ENCODE measurements at regions of chr21 and their contacts with region 1.

Region 1: DNA sequence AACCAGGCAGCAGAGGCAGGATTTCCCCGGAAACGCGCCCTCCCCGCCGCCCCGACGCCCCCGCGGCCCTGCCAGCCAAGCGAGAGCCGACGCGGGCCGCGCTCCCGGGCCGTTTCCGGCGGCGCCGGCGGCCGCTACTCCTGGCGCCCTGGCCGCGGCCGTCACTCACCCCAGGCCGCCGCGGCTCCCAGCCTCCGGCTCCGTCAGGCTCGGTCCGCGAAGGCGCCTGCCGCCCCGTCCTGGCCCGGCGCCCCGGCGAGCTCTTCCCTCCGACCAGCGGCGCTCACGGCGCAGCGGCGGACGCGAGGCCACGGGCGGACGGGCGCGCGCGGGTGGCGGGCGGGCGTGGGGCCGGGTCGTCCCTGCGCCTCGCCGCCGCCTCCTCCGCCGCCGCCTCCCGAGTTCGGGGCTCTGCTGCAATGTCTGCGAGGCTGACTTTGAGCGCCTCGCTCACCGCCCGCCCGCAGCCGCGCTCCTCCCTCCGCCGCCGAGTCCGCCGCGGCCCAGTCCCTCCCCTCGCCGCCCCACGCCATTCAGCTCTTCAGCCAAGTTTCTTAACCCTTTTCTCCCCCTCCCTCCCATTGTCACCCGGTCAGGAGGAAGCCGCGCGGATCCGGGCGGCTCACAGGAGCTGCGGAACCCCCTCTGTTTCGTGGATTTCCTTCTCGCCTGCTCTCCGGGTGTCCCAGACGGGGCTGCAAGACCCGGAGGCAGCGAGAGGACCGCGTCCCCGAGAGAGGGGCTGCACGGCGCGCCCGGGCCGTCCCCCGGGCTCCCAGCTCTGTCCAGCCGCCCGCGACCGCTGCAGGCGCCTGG is at the start of gene NRIP1:
- DNase-seq: peak; percentile 81
- H3K4me3 Mint-ChIP-seq: peak within 1 kb of the TSS; percentile 84
- H3K27ac Mint-ChIP-seq: peak within 1 kb of the TSS; percentile 86
- H3K4me1 Mint-ChIP-seq: peaks cover 45% of the 10 kb centered on the region
- H3K27me3 Mint-ChIP-seq: peaks cover 16% of the 10 kb centered on the region
- total RNA-seq, gene NRIP1: 4.4 to 5.4 TPM

Region 2: DNA sequence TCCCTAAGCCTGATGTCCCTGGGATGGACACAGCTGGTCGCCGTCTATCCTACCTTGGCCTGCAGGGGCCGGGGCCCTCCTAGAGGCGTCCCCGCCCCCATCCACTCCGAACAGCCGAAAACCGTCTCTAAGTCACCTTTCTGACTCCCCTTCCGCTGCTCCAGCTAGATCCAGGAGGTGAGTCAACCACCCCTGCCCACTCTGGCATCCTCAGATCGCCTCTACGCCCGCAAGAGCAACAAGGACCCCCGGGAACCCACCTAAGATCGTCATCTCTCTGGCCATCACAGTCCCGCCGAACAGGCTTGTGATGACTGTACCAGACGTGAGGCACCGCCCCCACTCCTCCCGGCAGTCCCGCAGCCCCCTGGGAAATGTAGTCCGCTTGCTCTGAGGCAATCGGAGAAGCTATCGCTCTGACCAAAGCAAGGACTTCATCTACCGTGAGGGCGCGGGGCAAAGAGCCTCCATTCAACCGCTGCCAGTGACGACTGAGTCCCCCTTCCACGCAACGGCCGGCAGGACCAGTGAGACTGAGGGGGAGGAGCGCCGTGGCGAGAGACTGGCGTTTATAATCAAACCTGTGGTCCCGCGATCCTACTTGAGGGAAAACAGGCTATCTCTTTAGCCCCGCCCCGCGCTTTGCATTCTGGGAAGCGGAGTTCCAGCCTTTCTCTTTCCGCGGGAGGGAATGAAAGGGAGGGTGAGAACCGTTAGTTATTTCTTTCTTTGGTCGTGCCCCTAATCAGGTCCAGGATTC is 681.8 kb before region 1 on chr21 and contains the start of gene HSPA13:
- CTCF ChIA-PET with region 1: no interaction called
- POLR2A ChIA-PET with region 1: interaction called, 5 read pairs
- intact Hi-C with region 1: loop called (anchors 5 kb)
- DNase-seq: peak; percentile 100
- H3K4me3 Mint-ChIP-seq: peak within 1 kb of the TSS; percentile 95
- H3K27ac Mint-ChIP-seq: peak within 1 kb of the TSS; percentile 95
- H3K4me1 Mint-ChIP-seq: peaks cover 27% of the 10 kb centered on the region
- H3K27me3 Mint-ChIP-seq: no peaks in the 10 kb centered on the region
- total RNA-seq, gene HSPA13: 48.5 to 49.1 TPM

Region 3: DNA sequence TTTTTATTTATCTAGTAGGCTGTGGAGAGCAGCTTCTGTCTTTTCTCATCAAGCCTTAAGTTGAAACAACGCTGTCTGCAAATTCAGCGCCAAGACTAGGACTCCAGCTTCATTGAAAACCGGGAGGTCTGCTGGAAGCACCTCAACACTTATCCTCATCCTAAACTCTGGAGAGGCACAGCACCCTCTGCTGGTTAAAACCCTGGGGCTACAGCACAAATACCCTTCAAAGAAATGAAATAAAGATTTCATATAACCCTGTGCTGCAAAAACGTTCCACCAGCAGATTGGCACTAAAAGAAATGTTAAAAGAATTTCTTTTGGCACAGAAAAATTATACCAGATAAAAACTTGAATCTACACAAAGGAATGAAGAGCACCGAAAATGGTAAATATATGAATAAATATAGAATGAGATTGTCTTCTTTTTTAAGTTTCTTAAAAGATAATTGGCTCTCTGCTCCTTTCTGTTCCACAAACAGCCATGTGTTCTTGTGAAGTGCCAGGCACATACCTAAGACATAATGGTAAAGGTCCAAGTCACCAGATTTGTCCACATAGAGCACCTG is 290.9 kb before region 1 on chr21:
- CTCF ChIA-PET with region 1: no interaction called
- POLR2A ChIA-PET with region 1: no interaction called
- intact Hi-C with region 1: no loop called
- DNase-seq: peak; percentile 70
- H3K4me3 Mint-ChIP-seq: no peak overlapping the region
- H3K27ac Mint-ChIP-seq: no peak overlapping the region
- H3K4me1 Mint-ChIP-seq: no peaks in the 10 kb centered on the region
- H3K27me3 Mint-ChIP-seq: peaks cover 3% of the 10 kb centered on the region

Region 4: GRCh38 chr21:14864211-14865021 is 200.4 kb before region 1 on chr21:
- CTCF ChIA-PET with region 1: no interaction called
- POLR2A ChIA-PET with region 1: no interaction called
- intact Hi-C with region 1: loop called (anchors 2 kb)
- DNase-seq: peak; percentile 66
- H3K4me3 Mint-ChIP-seq: no peak overlapping the region
- H3K27ac Mint-ChIP-seq: no peak overlapping the region
- H3K4me1 Mint-ChIP-seq: no peaks in the 10 kb centered on the region
- H3K27me3 Mint-ChIP-seq: peaks cover 4% of the 10 kb centered on the region

Region 5: GRCh38 chr21:15221799-15222386 is 157.1 kb after region 1 on chr21:
- CTCF ChIA-PET with region 1: no interaction called
- POLR2A ChIA-PET with region 1: interaction called, 3 read pairs
- intact Hi-C with region 1: loop called (anchors 5 kb)
- DNase-seq: peak; percentile 45
- H3K4me3 Mint-ChIP-seq: no peak overlapping the region
- H3K27ac Mint-ChIP-seq: peak overlapping the region; percentile 18
- H3K4me1 Mint-ChIP-seq: peaks cover 8% of the 10 kb centered on the region
- H3K27me3 Mint-ChIP-seq: peaks cover 3% of the 10 kb centered on the region

Region 6: DNA sequence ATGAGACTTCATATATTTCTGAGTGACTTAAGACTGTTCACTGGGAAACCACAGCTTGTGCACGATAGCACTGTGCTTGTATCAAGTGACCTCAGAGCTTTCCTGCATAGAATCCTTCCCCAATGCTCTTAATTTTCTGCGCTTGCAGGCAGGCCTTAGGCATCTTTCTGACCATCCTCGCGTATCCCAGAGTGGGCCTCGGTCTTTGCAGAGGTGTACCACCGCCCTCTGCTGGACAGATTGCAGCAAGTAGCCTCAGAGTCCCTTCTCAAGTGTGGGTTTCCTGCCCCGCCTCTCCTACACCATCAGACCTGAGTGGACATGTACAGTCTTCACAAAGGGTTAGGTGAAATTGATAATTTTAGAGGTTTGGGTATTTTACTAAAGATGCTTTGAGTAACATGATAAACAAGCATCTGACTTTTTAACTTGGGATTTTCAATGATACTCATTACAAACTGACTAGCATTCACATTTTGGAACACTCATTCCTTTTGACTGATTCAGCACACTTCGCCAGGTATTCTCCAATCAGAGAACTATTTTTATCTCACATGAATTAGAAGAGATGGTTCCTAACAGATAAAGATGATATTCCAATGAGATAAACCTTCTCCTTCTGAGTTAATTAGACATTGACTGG is 418.5 kb after region 1 on chr21:
- CTCF ChIA-PET with region 1: interaction called, 7 read pairs
- POLR2A ChIA-PET with region 1: no interaction called
- intact Hi-C with region 1: loop called (anchors 1 kb)
- DNase-seq: peak; percentile 85
- H3K4me3 Mint-ChIP-seq: no peak overlapping the region
- H3K27ac Mint-ChIP-seq: no peak overlapping the region
- H3K4me1 Mint-ChIP-seq: peaks cover 20% of the 10 kb centered on the region
- H3K27me3 Mint-ChIP-seq: no peaks in the 10 kb centered on the region

Region 7: DNA sequence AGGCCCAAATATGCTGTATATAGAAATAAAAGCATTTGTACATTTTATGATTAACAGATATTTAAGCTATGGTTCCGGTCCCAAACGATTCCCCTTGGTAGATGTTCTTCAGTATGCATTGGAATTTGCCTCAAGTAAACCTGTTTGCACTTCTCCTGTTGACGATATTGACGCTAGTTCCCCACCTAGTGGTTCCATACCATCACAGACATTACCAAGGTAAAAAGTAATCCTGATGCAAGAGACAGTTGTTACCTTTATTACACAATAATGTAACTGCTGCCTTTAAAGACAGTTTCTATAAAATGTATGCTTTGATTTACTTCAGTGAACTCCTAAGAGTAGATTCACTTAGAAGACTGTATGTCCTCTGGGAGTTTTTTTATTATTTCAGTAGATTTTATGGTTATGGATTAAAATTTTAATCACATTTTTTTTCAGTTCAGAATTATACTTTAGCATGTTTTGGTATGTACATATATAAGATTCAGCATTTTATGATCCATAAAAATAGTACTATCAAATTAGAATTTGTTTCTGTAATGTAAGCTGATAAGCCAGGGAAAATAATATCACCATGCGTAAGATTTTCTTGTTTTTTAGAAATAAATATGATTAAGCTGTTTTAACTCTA is 761.5 kb after region 1 on chr21:
- CTCF ChIA-PET with region 1: no interaction called
- POLR2A ChIA-PET with region 1: no interaction called
- intact Hi-C with region 1: loop called (anchors 10 kb)
- DNase-seq: no peak
- H3K4me3 Mint-ChIP-seq: no peak overlapping the region
- H3K27ac Mint-ChIP-seq: no peak overlapping the region
- H3K4me1 Mint-ChIP-seq: peaks cover 22% of the 10 kb centered on the region
- H3K27me3 Mint-ChIP-seq: no peaks in the 10 kb centered on the region

Measured in activated CD4-positive, alpha-beta memory T cell treated with anti-CD3 and anti-CD28 coated beads for 36 hours (primary cell).